ENCODE measurements at regions of chr22 and their contacts with region 1.

Region 1: DNA sequence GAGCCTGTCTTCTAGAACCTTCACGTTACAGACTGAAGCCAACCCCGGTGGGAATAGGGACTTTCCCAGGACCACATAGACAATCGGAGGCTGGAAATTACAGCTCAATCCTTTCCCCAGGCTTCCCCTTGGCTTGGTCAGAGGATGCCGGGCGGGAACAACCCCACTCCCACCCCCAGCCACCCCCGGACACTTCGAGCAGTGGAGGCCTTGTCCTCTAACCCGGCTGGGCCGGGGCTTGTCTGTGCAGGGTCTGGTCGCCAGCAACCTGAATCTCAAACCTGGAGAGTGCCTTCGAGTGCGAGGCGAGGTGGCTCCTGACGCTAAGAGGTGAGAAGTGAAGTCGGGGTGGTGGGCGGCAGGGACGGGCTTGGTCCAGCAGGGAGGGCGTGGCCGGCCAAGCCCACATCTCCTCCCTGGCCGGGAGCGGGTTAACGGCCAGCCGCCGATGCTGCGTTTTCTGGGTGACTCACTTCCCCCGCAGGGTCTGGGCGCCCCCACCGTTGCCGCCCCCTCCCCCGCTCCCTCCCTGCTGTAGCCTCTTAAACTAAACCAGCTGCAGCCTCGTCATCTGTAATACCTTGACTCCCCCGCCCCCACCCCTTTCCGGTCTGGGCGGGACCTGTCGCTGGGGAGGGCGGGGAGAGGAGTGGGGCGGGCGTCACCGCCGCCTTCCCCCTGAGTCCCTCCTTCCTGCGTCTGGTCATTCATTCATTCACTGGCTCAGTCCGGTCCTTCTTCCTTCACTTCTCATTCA is 1.5 kb downstream of the LGALS1 start:
- DNase-seq: peak; percentile 95

Region 2: GRCh38 chr22:37608477-37609239 is 68.3 kb before region 1 on chr22 and contains the start of gene GGA1:
- intact Hi-C with region 1: loop called (anchors 2 kb)
- DNase-seq: peak; percentile 98
- total RNA-seq, gene GGA1: 32.5 TPM

Region 3: DNA sequence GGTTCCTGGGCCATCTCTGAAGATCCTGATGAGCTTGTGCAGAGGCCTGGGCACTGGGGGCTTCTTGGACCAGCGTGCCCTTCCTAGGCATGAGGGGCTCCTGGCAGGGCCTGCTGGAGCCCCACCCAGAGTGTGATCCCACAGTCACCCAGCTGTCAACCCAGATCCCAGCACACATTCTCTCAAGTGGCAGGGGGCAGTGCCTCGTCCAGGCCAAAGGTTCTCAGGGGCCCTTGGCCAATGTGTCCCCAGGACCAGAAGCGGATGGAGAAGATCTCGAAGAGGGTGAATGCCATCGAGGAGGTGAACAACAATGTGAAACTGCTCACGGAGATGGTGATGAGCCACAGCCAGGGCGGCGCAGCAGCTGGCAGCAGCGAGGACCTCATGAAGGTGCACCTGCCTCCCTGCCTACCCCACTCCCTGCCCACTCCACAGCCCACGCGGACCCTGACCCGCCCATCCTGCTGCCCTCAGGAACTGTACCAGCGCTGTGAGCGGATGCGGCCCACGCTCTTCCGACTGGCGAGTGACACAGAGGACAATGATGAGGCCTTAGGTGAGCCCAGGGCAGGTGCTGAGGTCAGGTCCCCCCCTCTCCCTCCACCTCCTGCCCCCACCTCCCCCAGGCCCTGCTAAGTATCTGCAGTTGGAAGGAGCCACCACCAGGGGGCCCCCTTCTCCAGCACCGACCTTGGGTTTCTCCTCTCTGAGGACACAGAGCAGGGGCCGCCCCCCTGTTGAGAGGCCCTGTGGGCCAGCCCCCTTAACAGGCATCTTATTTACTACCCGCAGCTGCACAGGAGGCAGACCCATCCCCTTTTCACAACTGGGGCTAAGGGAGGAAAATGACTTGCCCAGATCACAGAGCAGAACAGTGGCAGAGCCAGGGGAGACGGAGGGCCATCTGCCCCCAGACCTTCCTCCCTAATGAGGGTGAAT is 53.6 kb before region 1 on chr22:
- intact Hi-C with region 1: loop called (anchors 5 kb)
- DNase-seq: no peak

Region 4: GRCh38 chr22:37643225-37643847 is 33.6 kb before region 1 on chr22:
- intact Hi-C with region 1: loop called (anchors 2 kb)
- DNase-seq: peak; percentile 92

Region 5: GRCh38 chr22:37661160-37661924 is 15.6 kb before region 1 on chr22:
- intact Hi-C with region 1: loop called (anchors 2 kb)
- DNase-seq: no peak

Region 6: GRCh38 chr22:37741312-37741795 is 64.4 kb after region 1 on chr22:
- intact Hi-C with region 1: no loop called
- DNase-seq: peak; percentile 88

Region 7: GRCh38 chr22:37752466-37753087 is 75.7 kb after region 1 on chr22:
- intact Hi-C with region 1: loop called (anchors 5 kb)
- DNase-seq: peak; percentile 94